GM23248 (cell line): ENCODE measurements at regions of chr12 and their contacts with region 1.

Region 1: DNA sequence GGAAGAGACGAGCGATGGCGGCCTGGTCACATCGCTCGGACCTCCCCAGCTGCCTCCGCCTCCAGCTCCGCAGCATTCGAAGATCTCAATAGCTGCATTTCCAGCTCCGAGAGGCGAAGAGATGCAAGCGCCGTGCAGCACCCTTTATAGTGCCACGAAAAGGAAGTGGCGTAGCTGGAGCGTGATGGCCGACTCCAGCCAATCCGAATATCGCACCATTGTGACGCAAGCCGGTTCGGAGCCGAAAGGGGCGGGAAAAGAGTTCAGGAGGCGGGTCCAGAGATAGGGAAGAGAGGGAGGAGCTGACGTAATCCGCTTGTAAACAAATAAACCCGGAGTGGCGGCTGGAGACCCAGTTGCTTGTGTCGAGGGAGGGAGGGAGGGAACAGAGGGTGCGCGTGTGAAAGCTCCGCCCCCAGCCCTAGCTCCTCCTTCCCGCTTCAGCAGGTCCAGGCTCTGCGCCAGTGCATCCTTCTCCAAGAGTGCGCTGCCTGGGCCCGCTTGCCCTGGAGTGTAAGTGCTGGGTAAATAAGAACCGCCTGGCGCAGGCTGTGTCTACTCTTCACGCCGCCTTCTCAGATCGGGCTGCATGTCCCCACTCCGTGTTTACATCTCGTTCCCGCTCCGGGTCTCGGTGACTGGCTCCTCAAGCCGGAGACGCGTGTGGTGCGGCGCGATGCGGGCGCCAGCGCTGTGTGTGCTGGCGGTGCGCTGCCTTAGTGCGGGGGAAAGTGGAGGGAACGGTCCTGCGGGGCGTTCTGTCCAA is at the start of gene BTG1:
- DNase-seq: peak; percentile 100
- H3K4me3 ChIP-seq: peak within 1 kb of the TSS; percentile 95
- H3K27ac ChIP-seq: peak within 1 kb of the TSS; percentile 90
- H3K4me1 ChIP-seq: peaks cover 31% of the 10 kb centered on the region
- H3K27me3 ChIP-seq: no peaks in the 10 kb centered on the region
- total RNA-seq, gene BTG1: 13.9 and 14.4 TPM in 2 replicates

Region 2: DNA sequence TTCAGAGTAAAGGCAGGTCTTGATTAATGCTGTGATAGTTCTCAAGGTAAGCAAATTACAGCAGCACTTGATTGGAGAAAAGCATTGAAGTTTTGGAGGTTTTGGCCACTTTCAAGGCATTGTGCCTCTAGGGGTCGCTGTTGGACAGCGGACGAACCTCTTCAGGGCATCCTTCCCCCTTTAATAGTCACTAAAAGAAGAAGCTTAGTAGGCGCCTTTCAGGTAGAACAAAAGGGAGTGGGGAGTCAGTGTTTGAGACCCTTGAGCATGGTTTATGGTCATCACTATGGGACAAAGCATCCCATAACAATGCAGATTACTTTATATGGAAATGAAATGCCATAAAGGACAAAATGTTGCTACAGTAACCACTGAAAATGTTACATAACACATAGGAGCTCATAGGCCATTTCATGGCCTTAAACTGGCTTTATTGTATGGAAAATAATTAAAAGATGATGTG is 763.8 kb before region 1 on chr12:
- in situ Hi-C with region 1: loop called (anchors 10 kb)
- DNase-seq: peak; percentile 78
- H3K4me3 ChIP-seq: peak overlapping the region; percentile 87
- H3K27ac ChIP-seq: peak overlapping the region; percentile 74
- H3K4me1 ChIP-seq: peaks cover 21% of the 10 kb centered on the region
- H3K27me3 ChIP-seq: 0 out of 2 replicates have a peak, but pooled peaks cover 2% of the 10 kb centered on the region

Region 3: GRCh38 chr12:91577586-91578539 is 568.1 kb before region 1 on chr12:
- in situ Hi-C with region 1: loop called (anchors 25 kb)
- DNase-seq: peak; percentile 61
- H3K4me3 ChIP-seq: peak overlapping the region; percentile 65
- H3K27ac ChIP-seq: no peak overlapping the region
- H3K4me1 ChIP-seq: peaks cover 9% of the 10 kb centered on the region; the same call in 1 of the 2 replicates
- H3K27me3 ChIP-seq: no peaks in the 10 kb centered on the region

Region 4: DNA sequence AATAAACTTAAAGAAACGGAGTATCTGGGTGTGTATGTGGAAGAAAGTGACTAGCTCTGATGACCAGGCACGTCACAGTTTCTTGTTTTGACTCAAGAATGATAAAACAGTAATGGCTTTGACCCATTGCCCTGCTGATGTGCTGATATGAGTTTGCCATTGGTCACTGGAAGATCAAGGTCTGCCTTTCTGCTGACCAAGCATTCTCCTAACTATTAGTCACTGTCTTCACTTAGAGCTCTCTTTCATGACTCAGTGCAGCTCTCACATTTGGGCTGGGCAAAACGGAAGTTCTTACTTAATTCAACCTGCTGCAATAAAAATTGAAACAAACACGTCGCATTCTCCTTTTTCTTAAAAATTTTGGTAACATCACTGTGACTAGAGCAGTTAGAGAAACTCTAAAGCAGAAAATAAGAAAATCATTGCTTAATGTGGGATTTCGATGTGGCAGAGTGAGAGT is 366.9 kb before region 1 on chr12:
- in situ Hi-C with region 1: no loop called
- DNase-seq: peak; percentile 93
- H3K4me3 ChIP-seq: peak overlapping the region; percentile 59
- H3K27ac ChIP-seq: peak overlapping the region; percentile 72
- H3K4me1 ChIP-seq: peaks cover 25% of the 10 kb centered on the region
- H3K27me3 ChIP-seq: no peaks in the 10 kb centered on the region

Region 5: GRCh38 chr12:91896286-91897024 is 249.5 kb before region 1 on chr12:
- in situ Hi-C with region 1: no loop called
- DNase-seq: peak; percentile 9
- H3K4me3 ChIP-seq: no peak overlapping the region
- H3K27ac ChIP-seq: no peak overlapping the region
- H3K4me1 ChIP-seq: no peaks in the 10 kb centered on the region
- H3K27me3 ChIP-seq: no peaks in the 10 kb centered on the region

Region 6: GRCh38 chr12:92561543-92561899 is 415.6 kb after region 1 on chr12:
- in situ Hi-C with region 1: loop called (anchors 10 kb)
- DNase-seq: peak; percentile 89
- H3K4me3 ChIP-seq: no peak overlapping the region
- H3K27ac ChIP-seq: peak overlapping the region; percentile 26; the same call in 1 of the 2 replicates
- H3K4me1 ChIP-seq: peaks cover 26% of the 10 kb centered on the region
- H3K27me3 ChIP-seq: no peaks in the 10 kb centered on the region

Region 7: GRCh38 chr12:92784356-92784755 is 638.4 kb after region 1 on chr12:
- in situ Hi-C with region 1: no loop called
- DNase-seq: peak; percentile 18
- H3K4me3 ChIP-seq: no peak overlapping the region
- H3K27ac ChIP-seq: peak overlapping the region; percentile 28
- H3K4me1 ChIP-seq: peaks cover 32% of the 10 kb centered on the region
- H3K27me3 ChIP-seq: no peaks in the 10 kb centered on the region

Region 8: GRCh38 chr12:92794814-92795213 is 648.9 kb after region 1 on chr12:
- in situ Hi-C with region 1: no loop called
- DNase-seq: no peak
- H3K4me3 ChIP-seq: no peak overlapping the region
- H3K27ac ChIP-seq: no peak overlapping the region
- H3K4me1 ChIP-seq: peaks cover 6% of the 10 kb centered on the region
- H3K27me3 ChIP-seq: no peaks in the 10 kb centered on the region